ENCODE measurements at regions of chr16 and their contacts with region 1.

Region 1: GRCh38 chr16:53503270-53503923 is 388 bp upstream of the AKTIP start:
- DNase-seq: peak; percentile 97 to 100 (median 100)
- ATAC-seq: peak; percentile 88
- H3K4me3 ChIP-seq: peak overlapping the region; percentile 76
- H3K4me3 Mint-ChIP-seq: peak overlapping the region; percentile 93
- H3K27ac ChIP-seq: peak overlapping the region; percentile 76 to 84
- H3K27ac Mint-ChIP-seq: peak overlapping the region; percentile 86
- H3K4me1 ChIP-seq: peaks cover 44% of the 10 kb centered on the region
- H3K4me1 Mint-ChIP-seq: peaks cover 65% of the 10 kb centered on the region
- H3K27me3 ChIP-seq: no peaks in the 10 kb centered on the region
- H3K27me3 Mint-ChIP-seq: no peaks in the 10 kb centered on the region
- CTCF ChIP-seq: no peak

Region 2: DNA sequence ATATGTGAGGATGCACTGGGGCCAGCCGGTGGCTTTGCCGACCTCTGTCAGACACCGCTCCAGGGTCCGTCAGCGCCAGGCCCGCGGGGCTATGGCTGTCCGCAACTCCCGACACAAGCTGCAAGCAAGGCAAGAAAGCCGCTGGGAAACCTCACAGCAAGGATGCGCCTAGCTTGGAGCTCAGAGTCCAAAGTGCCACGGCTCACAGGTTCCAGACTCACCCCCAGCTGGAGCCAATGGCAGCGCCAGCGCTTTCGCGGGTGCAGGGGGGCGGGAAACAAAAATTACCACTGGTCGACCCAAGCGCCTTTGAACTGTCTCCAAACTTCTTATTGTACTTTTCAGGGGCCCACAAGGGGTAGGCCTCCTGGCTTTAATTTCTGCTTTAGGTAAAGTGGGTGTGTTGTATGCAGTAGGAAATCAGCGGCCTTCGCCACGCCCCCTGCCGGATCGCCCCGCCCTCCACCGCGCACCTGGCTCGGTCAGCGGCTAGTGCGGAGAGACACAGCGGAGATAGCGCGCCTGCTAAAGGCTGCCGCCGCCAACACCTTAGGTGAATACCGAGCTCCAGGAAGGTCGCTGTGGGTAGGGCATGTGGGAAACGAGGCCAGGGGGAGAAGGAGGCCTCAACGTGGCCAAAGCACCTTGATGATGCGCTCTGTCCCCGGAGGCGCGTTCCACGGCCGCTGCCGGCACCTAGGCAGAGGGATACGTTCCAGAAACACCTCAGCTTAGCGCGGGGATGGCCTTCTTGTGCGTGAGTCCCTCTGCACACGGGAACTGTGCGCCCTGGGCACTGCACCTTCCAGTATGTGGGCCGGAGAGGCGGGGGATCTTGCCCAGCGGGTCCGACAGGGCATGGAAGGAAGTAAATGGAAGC is 130.2 kb before region 1 on chr16:
- CTCF ChIA-PET with region 1: no interaction called
- POLR2A ChIA-PET with region 1: interaction called, 6 read pairs
- intact Hi-C with region 1: loop called (anchors 2 to 5 kb)
- DNase-seq: peak; percentile 65 to 94 (median 82)
- ATAC-seq: peak; percentile 96
- H3K4me3 ChIP-seq: peak overlapping the region; percentile 72
- H3K4me3 Mint-ChIP-seq: no peak overlapping the region
- H3K27ac ChIP-seq: no peak overlapping the region
- H3K27ac Mint-ChIP-seq: peak overlapping the region; percentile 59
- H3K4me1 ChIP-seq: peaks cover 13% of the 10 kb centered on the region
- H3K4me1 Mint-ChIP-seq: peaks cover 35% of the 10 kb centered on the region
- H3K27me3 ChIP-seq: no peaks in the 10 kb centered on the region
- H3K27me3 Mint-ChIP-seq: no peaks in the 10 kb centered on the region
- CTCF ChIP-seq: no peak

Region 3: DNA sequence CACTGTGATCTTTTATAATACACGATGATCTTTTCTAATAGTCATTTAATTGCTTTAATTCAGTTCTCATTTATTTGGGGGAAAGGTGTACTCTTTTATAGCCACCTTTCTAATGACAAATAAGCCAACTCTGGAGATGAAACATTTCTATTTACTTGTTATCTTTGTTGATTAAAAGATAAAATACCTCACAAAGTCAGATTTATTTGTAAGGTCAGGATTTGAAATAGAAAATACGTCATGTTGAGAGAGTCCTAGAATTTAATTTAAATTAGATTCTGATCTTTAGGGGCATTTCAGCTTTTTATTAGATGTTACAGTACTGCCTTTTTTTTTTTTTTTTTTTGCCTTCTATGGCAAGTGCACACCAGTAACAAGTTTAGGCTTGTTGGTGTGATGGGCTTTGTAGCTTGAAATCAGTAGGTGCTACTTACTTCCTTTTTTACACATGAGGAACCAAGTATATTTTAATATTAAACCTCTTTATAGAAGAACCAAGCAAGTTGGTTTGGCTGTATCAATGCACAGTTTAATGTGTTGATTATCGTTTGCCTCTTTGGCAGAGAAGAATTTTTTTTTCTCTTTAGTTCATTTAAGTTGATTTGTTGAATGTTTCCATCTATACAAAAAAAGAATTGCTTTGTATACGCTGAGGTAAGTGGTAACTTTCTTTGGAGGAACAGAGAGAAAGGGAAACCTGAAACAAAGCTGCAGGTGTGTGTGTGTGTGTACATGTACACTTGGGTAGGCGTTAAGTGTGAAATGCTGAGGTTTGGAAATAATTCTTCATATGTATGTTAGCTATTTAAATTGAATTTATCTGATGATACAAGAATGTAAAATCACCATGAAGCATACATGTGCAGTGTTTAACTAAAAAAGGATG is 53.5 kb before region 1 on chr16:
- CTCF ChIA-PET with region 1: interaction called, 3 read pairs
- POLR2A ChIA-PET with region 1: interaction called, 54 read pairs
- intact Hi-C with region 1: loop called in 1 of 2 experiments (anchors 5 kb)
- DNase-seq: peak in 1 of 14 experiments; percentile 57
- ATAC-seq: peak; percentile 42
- H3K4me3 ChIP-seq: peak overlapping the region; percentile 42
- H3K4me3 Mint-ChIP-seq: peak overlapping the region; percentile 89
- H3K27ac ChIP-seq: peak overlapping the region in 1 of 2 donors; percentile 37
- H3K27ac Mint-ChIP-seq: peak overlapping the region; percentile 93
- H3K4me1 ChIP-seq: peaks cover 42% of the 10 kb centered on the region
- H3K4me1 Mint-ChIP-seq: peaks cover 81% of the 10 kb centered on the region
- H3K27me3 ChIP-seq: no peaks in the 10 kb centered on the region
- H3K27me3 Mint-ChIP-seq: no peaks in the 10 kb centered on the region
- CTCF ChIP-seq: no peak

Region 4: GRCh38 chr16:53489755-53490154 is 13.6 kb before region 1 on chr16:
- CTCF ChIA-PET with region 1: interaction called, 3 read pairs
- POLR2A ChIA-PET with region 1: interaction called, 16 read pairs
- intact Hi-C with region 1: no loop called
- DNase-seq: no peak
- ATAC-seq: no peak
- H3K4me3 ChIP-seq: no peak overlapping the region
- H3K4me3 Mint-ChIP-seq: no peak overlapping the region
- H3K27ac ChIP-seq: no peak overlapping the region
- H3K27ac Mint-ChIP-seq: peak overlapping the region; percentile 72
- H3K4me1 ChIP-seq: no peaks in the 10 kb centered on the region
- H3K4me1 Mint-ChIP-seq: peaks cover 73% of the 10 kb centered on the region
- H3K27me3 ChIP-seq: no peaks in the 10 kb centered on the region
- H3K27me3 Mint-ChIP-seq: no peaks in the 10 kb centered on the region
- CTCF ChIP-seq: no peak

Region 5: GRCh38 chr16:53518550-53519416 is 15.4 kb after region 1 on chr16:
- CTCF ChIA-PET with region 1: interaction called, 4 read pairs
- POLR2A ChIA-PET with region 1: interaction called, 38 read pairs
- intact Hi-C with region 1: loop called in 1 of 2 experiments (anchors 1 kb)
- DNase-seq: peak; percentile 45 to 94 (median 65)
- ATAC-seq: peak; percentile 82
- H3K4me3 ChIP-seq: peak overlapping the region; percentile 49
- H3K4me3 Mint-ChIP-seq: peak overlapping the region; percentile 73
- H3K27ac ChIP-seq: peak overlapping the region in 1 of 2 donors; percentile 78
- H3K27ac Mint-ChIP-seq: peak overlapping the region; percentile 75
- H3K4me1 ChIP-seq: peaks cover 55% of the 10 kb centered on the region
- H3K4me1 Mint-ChIP-seq: peaks cover 43% of the 10 kb centered on the region
- H3K27me3 ChIP-seq: no peaks in the 10 kb centered on the region
- H3K27me3 Mint-ChIP-seq: no peaks in the 10 kb centered on the region
- CTCF ChIP-seq: no peak

Measured in CD4-positive, alpha-beta T cell (primary cell).